Activated CD8-positive, alpha-beta T cell treated with anti-CD3 and anti-CD28 coated beads for 36 hours (primary cell): ENCODE measurements at regions of chr18 and their contacts with region 1.

Region 1: GRCh38 chr18:51668101-51668500 is 470.6 kb upstream of the MEX3C start:
- DNase-seq: peak; percentile 76
- ATAC-seq: peak; percentile 39
- H3K4me3 Mint-ChIP-seq: no peak overlapping the region
- H3K27ac Mint-ChIP-seq: no peak overlapping the region
- H3K4me1 Mint-ChIP-seq: no peaks in the 10 kb centered on the region
- H3K27me3 Mint-ChIP-seq: peaks cover 10% of the 10 kb centered on the region
- CTCF ChIP-seq: peak; percentile 69

Region 2: GRCh38 chr18:51614033-51614432 is 54.1 kb before region 1 on chr18:
- CTCF ChIA-PET with region 1: no interaction called
- POLR2A ChIA-PET with region 1: no interaction called
- intact Hi-C with region 1: no loop called
- DNase-seq: no peak
- ATAC-seq: no peak
- H3K4me3 Mint-ChIP-seq: no peak overlapping the region
- H3K27ac Mint-ChIP-seq: no peak overlapping the region
- H3K4me1 Mint-ChIP-seq: no peaks in the 10 kb centered on the region
- H3K27me3 Mint-ChIP-seq: no peaks in the 10 kb centered on the region
- CTCF ChIP-seq: no peak

Region 3: GRCh38 chr18:52288403-52289004 is 620.4 kb after region 1 on chr18:
- CTCF ChIA-PET with region 1: interaction called, 3 read pairs
- POLR2A ChIA-PET with region 1: no interaction called
- intact Hi-C with region 1: loop called (anchors 5 kb)
- DNase-seq: peak; percentile 46
- ATAC-seq: no peak
- H3K4me3 Mint-ChIP-seq: no peak overlapping the region
- H3K27ac Mint-ChIP-seq: no peak overlapping the region
- H3K4me1 Mint-ChIP-seq: no peaks in the 10 kb centered on the region
- H3K27me3 Mint-ChIP-seq: no peaks in the 10 kb centered on the region
- CTCF ChIP-seq: peak; percentile 70